ENCODE measurements at regions of chr7 and their contacts with region 1.

Region 1: DNA sequence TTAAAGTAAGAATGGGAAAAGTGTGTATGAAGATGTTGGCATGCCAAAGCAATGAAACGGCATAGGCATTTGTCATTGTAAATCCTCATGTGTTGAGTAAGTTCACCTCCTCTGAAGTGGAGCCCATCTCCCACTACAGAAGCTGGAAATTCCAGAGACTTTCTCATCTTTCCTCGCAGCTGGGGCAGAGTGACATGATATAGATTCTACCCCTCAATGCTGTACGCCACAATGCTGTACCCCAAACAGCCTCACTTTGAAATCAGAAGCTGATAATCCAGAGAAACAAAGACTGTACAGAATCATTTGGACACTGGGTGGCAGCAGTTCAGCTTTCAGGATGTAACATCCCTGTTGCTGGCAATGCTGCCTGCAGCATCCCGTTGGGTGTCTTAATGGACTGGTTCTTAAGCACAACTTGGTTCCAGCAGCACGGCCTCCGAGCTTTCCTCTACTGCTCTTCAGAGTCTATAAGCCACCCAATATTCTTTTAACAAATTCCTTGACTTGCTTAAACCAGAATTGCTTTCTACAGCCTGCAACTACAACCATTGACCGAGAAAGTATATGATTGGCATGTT is 18.8 kb downstream of the ZC3HAV1L start:
- DNase-seq: peak; percentile 81
- ATAC-seq: peak; percentile 100
- H3K4me3 Mint-ChIP-seq: no peak overlapping the region
- H3K27ac Mint-ChIP-seq: no peak overlapping the region
- H3K4me1 Mint-ChIP-seq: peaks cover 12% of the 10 kb centered on the region
- H3K27me3 Mint-ChIP-seq: peaks cover 9% of the 10 kb centered on the region

Region 2: GRCh38 chr7:139068544-139069399 is 51.8 kb after region 1 on chr7:
- CTCF ChIA-PET with region 1: interaction called, 38 read pairs
- POLR2A ChIA-PET with region 1: no interaction called
- DNase-seq: peak; percentile 48
- ATAC-seq: peak; percentile 22
- H3K4me3 Mint-ChIP-seq: no peak overlapping the region
- H3K27ac Mint-ChIP-seq: peak overlapping the region; percentile 58
- H3K4me1 Mint-ChIP-seq: peaks cover 57% of the 10 kb centered on the region
- H3K27me3 Mint-ChIP-seq: no peaks in the 10 kb centered on the region

Region 3: GRCh38 chr7:139127648-139128047 is 110.6 kb after region 1 on chr7:
- CTCF ChIA-PET with region 1: interaction called, 13 read pairs
- POLR2A ChIA-PET with region 1: no interaction called
- DNase-seq: no peak
- ATAC-seq: no peak
- H3K4me3 Mint-ChIP-seq: no peak overlapping the region
- H3K27ac Mint-ChIP-seq: no peak overlapping the region
- H3K4me1 Mint-ChIP-seq: peaks cover 26% of the 10 kb centered on the region
- H3K27me3 Mint-ChIP-seq: peaks cover 5% of the 10 kb centered on the region